HEK293 (cell line): ENCODE measurements at regions of chr19 and their contacts with region 1.

Region 1: GRCh38 chr19:1445185-1445931 is 4.6 kb upstream of the APC2 start:
- H3K4me3 ChIP-seq: peak overlapping the region; percentile 39
- H3K27ac ChIP-seq: no peak overlapping the region; the same call in 1 of the 2 replicates
- H3K4me1 ChIP-seq: peaks cover 12% of the 10 kb centered on the region; the same call in 1 of the 2 replicates
- CTCF ChIP-seq: peak; percentile 71

Region 2: GRCh38 chr19:1161716-1162115 is 283.6 kb before region 1 on chr19:
- CTCF ChIA-PET with region 1: no interaction called
- POLR2A ChIA-PET with region 1: no interaction called
- H3K4me3 ChIP-seq: no peak overlapping the region
- H3K27ac ChIP-seq: no peak overlapping the region
- H3K4me1 ChIP-seq: 0 out of 2 replicates have a peak, but pooled peaks cover 2% of the 10 kb centered on the region
- CTCF ChIP-seq: no peak

Region 3: DNA sequence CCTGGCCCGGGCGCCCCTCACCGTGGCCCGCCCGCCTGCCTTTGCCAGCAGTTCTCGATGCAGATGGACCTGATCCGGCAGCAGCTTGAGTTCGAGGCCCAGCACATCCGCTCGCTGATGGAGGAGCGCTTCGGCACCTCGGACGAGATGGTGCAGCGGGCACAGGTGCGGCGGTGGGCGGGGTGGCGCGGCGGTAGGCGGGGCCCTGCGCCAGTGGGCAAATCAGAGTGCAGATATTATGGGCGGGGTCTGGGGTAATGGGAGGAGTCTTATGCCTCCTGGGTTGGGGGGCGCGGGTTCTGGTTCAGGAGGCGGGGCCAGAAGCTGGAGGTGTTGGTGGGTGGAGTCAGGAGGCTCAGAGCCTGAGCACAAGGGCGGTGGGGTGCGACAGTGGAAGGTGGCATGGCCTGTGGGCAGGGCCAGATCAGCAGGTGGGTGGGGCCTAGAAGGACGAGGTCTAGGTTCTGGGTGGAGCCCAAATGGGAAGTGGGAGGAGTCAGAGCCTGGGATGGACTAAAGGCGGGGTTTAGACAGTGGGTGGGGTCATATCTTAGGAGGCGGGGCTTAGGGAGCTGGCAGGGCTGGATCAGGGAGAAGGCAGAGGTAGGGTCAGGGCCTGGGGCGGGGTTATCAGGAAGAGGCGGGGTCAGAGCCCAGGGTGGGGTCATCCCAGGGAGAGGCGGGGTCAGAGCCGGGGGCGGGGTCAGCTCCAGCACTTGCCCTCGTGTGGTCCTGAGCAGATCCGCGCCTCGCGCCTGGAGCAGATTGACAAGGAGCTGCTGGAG is 10.2 kb after region 1 on chr19:
- CTCF ChIA-PET with region 1: interaction called, 21 read pairs
- POLR2A ChIA-PET with region 1: interaction called, 10 read pairs
- H3K4me3 ChIP-seq: no peak overlapping the region
- H3K27ac ChIP-seq: no peak overlapping the region
- H3K4me1 ChIP-seq: no peaks in the 10 kb centered on the region
- CTCF ChIP-seq: no peak